Activated CD8-positive, alpha-beta T cell treated with anti-CD3 and anti-CD28 coated beads, Interleukin-2, amount 10 ng/mL, durations not matched to agents 7 days and 5 days (primary cell): ENCODE measurements at regions of chr10 and their contacts with region 1.

Region 1: GRCh38 chr10:93482145-93482834 is at the start of gene MYOF:
- DNase-seq: peak; percentile 69
- ATAC-seq: peak; percentile 87
- H3K4me3 Mint-ChIP-seq: peak within 1 kb of the TSS; percentile 82
- H3K27ac Mint-ChIP-seq: peak within 1 kb of the TSS; percentile 30
- H3K4me1 Mint-ChIP-seq: peaks cover 11% of the 10 kb centered on the region
- H3K27me3 Mint-ChIP-seq: peaks cover 21% of the 10 kb centered on the region
- total RNA-seq, gene MYOF: 0.37 to 0.39 TPM

Region 2: GRCh38 chr10:93330824-93331223 is 151.5 kb before region 1 on chr10:
- CTCF ChIA-PET with region 1: no interaction called
- POLR2A ChIA-PET with region 1: no interaction called
- DNase-seq: no peak
- ATAC-seq: no peak
- H3K4me3 Mint-ChIP-seq: no peak overlapping the region
- H3K27ac Mint-ChIP-seq: no peak overlapping the region
- H3K4me1 Mint-ChIP-seq: no peaks in the 10 kb centered on the region
- H3K27me3 Mint-ChIP-seq: no peaks in the 10 kb centered on the region

Region 3: DNA sequence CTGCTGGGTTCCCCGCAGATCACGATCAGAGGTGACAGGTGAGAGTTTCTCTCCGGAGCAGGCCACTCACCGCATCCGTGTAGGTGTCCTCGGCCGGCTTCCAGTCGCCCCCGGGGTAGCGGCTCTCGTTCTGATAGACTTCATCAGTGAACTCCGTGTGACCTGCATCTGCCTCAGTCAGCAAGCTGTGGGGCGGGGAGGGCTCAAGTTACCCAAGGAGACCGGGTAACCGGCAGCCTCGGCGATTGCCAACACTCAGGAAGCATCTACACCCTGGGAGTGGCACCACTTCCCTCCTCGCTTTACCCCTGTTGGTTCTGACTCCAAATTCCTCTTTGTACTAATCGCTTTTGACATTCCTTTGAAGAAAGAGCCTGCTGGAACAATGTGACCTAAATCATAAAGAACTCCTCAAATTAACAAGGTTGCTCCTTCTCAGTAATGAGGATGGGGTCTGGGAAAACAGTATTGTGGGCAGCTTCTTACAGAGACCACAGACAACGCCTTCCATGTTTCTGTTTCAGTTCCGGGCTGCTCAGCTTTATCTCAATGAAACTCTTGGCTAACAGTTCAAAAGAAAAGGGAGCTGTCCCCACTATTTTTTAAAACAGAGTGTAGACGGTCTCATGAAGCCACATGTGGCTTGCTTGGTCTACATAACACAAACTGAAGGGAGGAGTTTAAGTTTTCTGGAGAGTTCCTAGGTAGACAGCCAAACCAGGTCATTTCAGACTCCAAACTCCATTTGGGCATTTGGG is 118.2 kb before region 1 on chr10:
- CTCF ChIA-PET with region 1: interaction called, 35 read pairs
- POLR2A ChIA-PET with region 1: no interaction called
- DNase-seq: no peak
- ATAC-seq: no peak
- H3K4me3 Mint-ChIP-seq: no peak overlapping the region
- H3K27ac Mint-ChIP-seq: no peak overlapping the region
- H3K4me1 Mint-ChIP-seq: peaks cover 6% of the 10 kb centered on the region
- H3K27me3 Mint-ChIP-seq: peaks cover 3% of the 10 kb centered on the region

Region 4: DNA sequence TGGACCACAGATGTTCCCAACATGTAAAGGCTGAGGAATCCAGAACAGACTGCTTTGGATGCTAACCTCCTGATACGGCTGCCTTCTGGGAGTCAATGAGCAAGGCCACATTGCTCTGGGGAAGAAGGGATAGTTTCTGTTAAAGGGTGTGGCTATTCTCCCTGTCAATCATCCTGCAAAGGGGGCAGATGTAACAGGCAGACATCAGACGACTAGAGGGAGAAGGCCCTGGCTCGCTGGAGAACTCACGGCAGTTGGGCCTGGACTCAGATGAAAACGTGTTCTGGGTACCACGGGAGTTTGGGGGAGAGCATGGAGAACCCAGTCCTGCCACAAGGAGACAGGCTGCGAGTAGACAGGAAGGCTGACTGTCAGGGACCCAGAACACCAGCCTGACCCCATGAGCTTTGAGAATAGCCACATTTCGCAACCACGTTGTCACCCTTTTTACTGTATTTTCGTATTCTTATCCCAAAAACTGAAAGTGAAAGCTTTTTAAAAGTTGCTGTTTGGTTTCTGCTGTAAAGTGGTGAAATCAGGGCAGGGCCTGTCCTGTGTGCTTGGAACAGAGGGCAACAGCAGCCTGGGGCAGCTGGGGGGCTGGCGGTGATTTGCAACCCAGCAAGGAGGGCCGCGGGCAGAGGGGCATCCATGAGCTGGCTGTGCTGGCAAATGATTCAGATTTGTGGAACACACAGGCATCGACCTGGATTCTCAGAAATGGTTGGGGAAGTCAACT is 95.5 kb before region 1 on chr10:
- CTCF ChIA-PET with region 1: interaction called, 39 read pairs
- POLR2A ChIA-PET with region 1: no interaction called
- DNase-seq: peak; percentile 54
- ATAC-seq: peak; percentile 74
- H3K4me3 Mint-ChIP-seq: no peak overlapping the region
- H3K27ac Mint-ChIP-seq: peak overlapping the region; percentile 81
- H3K4me1 Mint-ChIP-seq: peaks cover 26% of the 10 kb centered on the region
- H3K27me3 Mint-ChIP-seq: no peaks in the 10 kb centered on the region

Region 5: DNA sequence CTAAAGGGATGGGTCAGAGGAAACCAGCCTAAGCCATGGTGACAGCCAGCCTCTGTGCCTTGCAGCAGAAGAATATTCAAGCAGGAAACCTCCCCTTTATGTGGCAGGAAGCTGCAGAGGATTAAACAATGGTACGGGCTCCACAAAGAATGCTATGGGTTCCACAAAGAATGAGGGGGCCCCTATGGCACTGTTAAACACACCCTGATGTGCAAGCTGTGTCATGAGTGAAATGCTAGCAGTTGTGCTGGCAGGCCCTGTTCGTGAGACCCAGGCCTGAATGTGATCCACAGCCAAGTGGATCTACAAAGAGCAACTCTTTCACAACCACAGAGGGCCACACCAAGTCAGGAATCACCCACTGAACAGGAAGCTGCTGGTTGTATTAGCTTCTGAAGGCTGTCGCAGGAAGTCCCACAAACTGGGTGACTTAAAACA is 69.0 kb before region 1 on chr10:
- CTCF ChIA-PET with region 1: interaction called, 36 read pairs
- POLR2A ChIA-PET with region 1: interaction called, 3 read pairs
- DNase-seq: peak; percentile 70
- ATAC-seq: peak; percentile 87
- H3K4me3 Mint-ChIP-seq: peak overlapping the region; percentile 20
- H3K27ac Mint-ChIP-seq: peak overlapping the region; percentile 95
- H3K4me1 Mint-ChIP-seq: peaks cover 55% of the 10 kb centered on the region
- H3K27me3 Mint-ChIP-seq: no peaks in the 10 kb centered on the region

Region 6: DNA sequence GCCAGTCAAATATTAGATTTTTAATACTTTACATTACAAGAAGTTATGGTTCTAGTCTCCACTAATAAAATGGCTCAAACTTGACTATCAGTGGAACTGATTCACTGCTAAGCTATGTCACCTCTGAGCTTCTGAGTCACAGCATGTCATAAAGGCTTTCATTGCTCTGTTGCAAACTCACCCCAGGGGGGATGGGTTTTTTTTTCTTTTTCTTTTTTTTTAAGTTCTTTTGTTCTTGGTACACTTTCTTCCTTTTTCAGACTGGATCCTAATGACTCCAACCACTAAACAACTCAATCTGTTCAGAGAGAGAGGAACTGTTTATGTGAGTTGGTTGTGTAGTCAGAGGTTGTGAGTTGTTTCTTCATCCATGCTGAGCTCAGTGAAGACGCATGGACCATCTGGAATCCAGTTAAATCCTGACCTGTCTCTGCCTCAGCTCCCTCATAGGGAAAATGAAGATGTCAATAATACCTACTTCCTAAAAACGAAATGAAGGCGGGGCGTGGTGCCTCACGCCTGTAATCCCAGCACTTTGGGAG is 11.1 kb before region 1 on chr10:
- CTCF ChIA-PET with region 1: interaction called, 13 read pairs
- POLR2A ChIA-PET with region 1: no interaction called
- DNase-seq: no peak
- ATAC-seq: no peak
- H3K4me3 Mint-ChIP-seq: no peak overlapping the region
- H3K27ac Mint-ChIP-seq: no peak overlapping the region
- H3K4me1 Mint-ChIP-seq: no peaks in the 10 kb centered on the region
- H3K27me3 Mint-ChIP-seq: no peaks in the 10 kb centered on the region

Region 7: GRCh38 chr10:93503075-93503474 is 20.8 kb after region 1 on chr10:
- CTCF ChIA-PET with region 1: interaction called, 26 read pairs
- POLR2A ChIA-PET with region 1: no interaction called
- DNase-seq: no peak
- ATAC-seq: no peak
- H3K4me3 Mint-ChIP-seq: no peak overlapping the region
- H3K27ac Mint-ChIP-seq: no peak overlapping the region
- H3K4me1 Mint-ChIP-seq: peaks cover 37% of the 10 kb centered on the region
- H3K27me3 Mint-ChIP-seq: no peaks in the 10 kb centered on the region

Region 8: GRCh38 chr10:93591065-93591808 is 108.9 kb after region 1 on chr10:
- CTCF ChIA-PET with region 1: no interaction called
- POLR2A ChIA-PET with region 1: no interaction called
- DNase-seq: no peak
- ATAC-seq: no peak
- H3K4me3 Mint-ChIP-seq: no peak overlapping the region
- H3K27ac Mint-ChIP-seq: no peak overlapping the region
- H3K4me1 Mint-ChIP-seq: no peaks in the 10 kb centered on the region
- H3K27me3 Mint-ChIP-seq: peaks cover 2% of the 10 kb centered on the region